CD4-positive, alpha-beta memory T cell (primary cell): ENCODE measurements at regions of chr9 and their contacts with region 1.

Region 1: DNA sequence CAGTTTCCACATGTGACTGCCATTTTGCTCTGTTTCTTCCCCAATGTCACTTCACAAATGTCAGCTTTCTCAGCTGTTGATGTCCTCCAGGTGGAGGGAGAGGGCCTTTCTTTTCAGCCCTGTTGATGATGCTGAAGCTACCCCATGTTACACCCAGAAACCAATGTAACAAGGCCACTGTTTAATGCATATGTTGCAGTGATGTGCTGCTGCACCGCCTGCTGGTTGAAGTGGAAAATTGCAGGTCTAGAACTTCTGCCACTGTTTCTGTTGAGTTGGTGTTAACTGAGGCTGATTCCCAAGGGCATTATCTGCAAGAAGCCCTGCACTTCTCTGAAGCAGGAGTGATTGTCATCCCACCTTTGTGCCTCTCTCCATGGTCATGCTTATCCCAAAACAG is 428.4 kb downstream of the KDM4C start:
- DNase-seq: no peak
- H3K4me3 ChIP-seq: no peak overlapping the region
- H3K4me3 Mint-ChIP-seq: no peak overlapping the region
- H3K27ac ChIP-seq: no peak overlapping the region
- H3K27ac Mint-ChIP-seq: no peak overlapping the region
- H3K4me1 ChIP-seq: no peaks in the 10 kb centered on the region
- H3K4me1 Mint-ChIP-seq: no peaks in the 10 kb centered on the region
- H3K27me3 ChIP-seq: no peaks in the 10 kb centered on the region
- H3K27me3 Mint-ChIP-seq: no peaks in the 10 kb centered on the region

Region 2: DNA sequence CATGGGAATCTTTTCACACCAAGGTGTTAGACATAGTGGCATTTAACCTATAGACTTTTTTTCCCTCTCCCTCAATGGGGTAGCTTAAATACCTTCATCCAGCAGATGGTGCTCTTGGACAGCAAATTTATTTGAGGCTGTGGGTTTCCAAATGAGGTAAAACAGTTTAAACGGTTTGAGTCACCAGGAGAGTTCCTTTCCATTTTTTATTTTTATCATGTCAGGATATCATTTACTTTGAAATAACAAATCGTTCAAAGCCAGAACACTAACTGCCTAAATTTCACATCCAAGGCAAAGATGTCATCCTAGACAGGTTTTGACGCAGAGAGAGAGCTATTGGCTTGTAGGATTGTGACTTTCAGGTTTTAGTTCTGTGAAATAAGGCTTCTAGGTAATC is 358.7 kb before region 1 on chr9:
- CTCF ChIA-PET with region 1: no interaction called
- POLR2A ChIA-PET with region 1: no interaction called
- intact Hi-C with region 1: loop called (anchors 5 kb)
- DNase-seq: peak in 4 of 5 donors; percentile 23 to 32 (median 28)
- H3K4me3 ChIP-seq: no peak overlapping the region
- H3K4me3 Mint-ChIP-seq: peak overlapping the region in 1 of 8 donors; percentile 21
- H3K27ac ChIP-seq: no peak overlapping the region
- H3K27ac Mint-ChIP-seq: peak overlapping the region in 3 of 7 donors; percentile 52 to 79 (median 53)
- H3K4me1 ChIP-seq: no peaks in the 10 kb centered on the region
- H3K4me1 Mint-ChIP-seq: peaks cover 7 to 20% (median 14%) of the 10 kb centered on the region in 4 donors
- H3K27me3 ChIP-seq: no peaks in the 10 kb centered on the region
- H3K27me3 Mint-ChIP-seq: no peaks in the 10 kb centered on the region